GM13977 (cell line): ENCODE measurements at regions of chr10 and their contacts with region 1.

Region 1: GRCh38 chr10:14822879-14823755 is 14.7 kb downstream of the CDNF start:
- DNase-seq: peak; percentile 64
- CTCF ChIP-seq: peak; percentile 77

Region 2: GRCh38 chr10:14536241-14537213 is 286.6 kb before region 1 on chr10:
- in situ Hi-C with region 1: loop called (anchors 10 kb)
- DNase-seq: peak; percentile 34
- CTCF ChIP-seq: peak; percentile 84

Region 3: DNA sequence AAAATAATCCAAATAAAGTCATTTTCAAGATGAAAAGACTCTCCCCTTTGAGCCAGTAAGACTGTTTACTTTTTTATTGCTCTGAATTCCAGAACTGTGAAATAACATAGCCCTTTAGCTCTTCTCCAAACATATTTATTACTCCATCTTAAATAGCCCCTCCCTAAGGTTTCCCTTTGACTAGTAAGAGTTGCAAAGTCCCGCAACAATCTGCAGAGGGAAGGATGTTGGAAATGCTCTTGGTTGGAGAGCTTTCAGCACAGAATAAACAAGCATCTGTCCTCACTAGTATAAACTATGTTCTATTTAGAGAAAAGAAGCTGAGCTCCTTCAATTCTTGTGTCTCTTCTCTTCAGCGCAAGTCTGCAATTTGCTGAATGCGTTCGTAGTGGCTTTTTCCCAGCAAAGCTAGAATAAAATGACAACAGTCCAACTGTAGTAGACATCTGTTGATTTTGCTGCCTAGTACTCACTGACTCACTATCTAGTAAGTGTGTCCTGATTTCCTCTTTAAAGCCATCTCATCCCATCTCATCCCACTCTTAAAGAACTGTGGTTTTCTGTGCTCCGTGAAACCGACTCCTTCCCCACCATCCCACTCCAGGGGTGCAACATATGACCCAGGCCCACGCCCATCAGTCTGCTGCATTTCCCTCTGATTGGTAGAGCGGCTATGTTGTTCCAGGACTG is 152.4 kb before region 1 on chr10:
- in situ Hi-C with region 1: no loop called
- DNase-seq: no peak
- CTCF ChIP-seq: no peak